ENCODE measurements at regions of chr9 and their contacts with region 1.

Region 1: GRCh38 chr9:84697509-84698114 is 28.1 kb downstream of the NTRK2 start:
- DNase-seq: peak; percentile 80 to 90
- H3K4me3 ChIP-seq: no peak overlapping the region
- H3K27ac ChIP-seq: no peak overlapping the region
- H3K4me1 ChIP-seq: peaks cover 0 to 6% (median 0%) of the 10 kb centered on the region in 4 experiments; a peak in 4 of 7 replicates
- H3K27me3 ChIP-seq: no peaks in the 10 kb centered on the region
- CTCF ChIP-seq: peak; percentile 90 to 95 (median 90)
- EP300 ChIP-seq: no peak; a peak in 1 of 3 replicates
- POLR2A ChIP-seq: no peak
- RAD21 ChIP-seq: peak; percentile 95 to 97

Region 2: DNA sequence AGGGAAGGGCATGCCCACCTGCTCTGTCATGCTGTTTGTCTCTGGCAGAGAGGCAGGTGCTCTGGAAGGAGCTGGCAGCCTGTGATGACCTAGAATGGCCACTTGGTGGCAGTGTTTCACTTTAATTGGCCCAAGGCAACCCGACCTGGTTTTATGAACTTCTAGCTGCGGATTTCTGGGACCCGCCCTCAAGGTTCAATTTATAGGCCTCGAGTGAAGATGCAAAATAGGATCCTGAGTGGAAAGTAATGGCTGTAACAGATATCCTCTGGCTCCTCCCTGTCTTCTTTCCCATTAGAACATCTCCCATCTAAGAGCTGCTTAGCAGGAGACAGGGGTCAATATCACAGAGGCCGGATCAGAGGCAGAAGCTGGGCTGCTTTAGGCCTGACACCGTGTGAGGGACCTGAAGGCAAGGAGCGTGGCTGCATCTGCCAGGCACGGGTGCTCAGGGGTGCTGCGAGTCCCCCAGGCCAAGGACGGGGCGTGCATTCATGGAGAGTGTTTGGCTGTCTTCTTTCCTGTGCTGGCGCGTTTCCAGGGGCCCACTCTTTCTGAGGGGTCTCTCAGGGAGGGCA is 300.4 kb before region 1 on chr9:
- CTCF ChIA-PET with region 1: interaction called, 12 read pairs
- POLR2A ChIA-PET with region 1: no interaction called
- DNase-seq: peak; percentile 31 to 81
- H3K4me3 ChIP-seq: no peak overlapping the region
- H3K27ac ChIP-seq: no peak overlapping the region
- H3K4me1 ChIP-seq: no peaks in the 10 kb centered on the region
- H3K27me3 ChIP-seq: no peaks in the 10 kb centered on the region
- CTCF ChIP-seq: peak; percentile 74 to 84 (median 77)
- EP300 ChIP-seq: no peak
- POLR2A ChIP-seq: no peak
- RAD21 ChIP-seq: peak; percentile 92 to 95

Region 3: DNA sequence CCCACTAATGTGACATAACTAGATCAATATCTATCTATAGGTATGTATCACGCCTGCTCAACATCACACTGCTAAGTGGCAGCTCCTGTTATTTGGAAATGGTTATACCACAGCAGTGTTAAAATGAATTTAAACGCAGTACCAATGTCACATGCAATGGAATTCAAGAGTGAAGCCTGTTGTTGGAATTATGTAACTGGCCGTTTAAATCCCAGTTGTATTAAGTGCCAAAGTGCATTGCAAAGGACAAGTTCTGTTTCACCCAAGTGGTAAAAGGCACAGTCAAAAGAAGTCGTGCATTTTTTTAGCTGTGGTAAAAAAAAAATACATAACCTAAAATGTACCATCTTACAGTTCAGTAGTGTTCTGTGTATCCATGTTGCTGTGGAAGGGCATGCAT is 23.8 kb before region 1 on chr9:
- CTCF ChIA-PET with region 1: interaction called, 12 read pairs
- POLR2A ChIA-PET with region 1: no interaction called
- DNase-seq: no peak
- H3K4me3 ChIP-seq: no peak overlapping the region
- H3K27ac ChIP-seq: no peak overlapping the region
- H3K4me1 ChIP-seq: peaks cover 0 to 12% (median 7%) of the 10 kb centered on the region in 4 experiments; a peak in 6 of 7 replicates
- H3K27me3 ChIP-seq: peaks cover 25 to 39% (median 36%) of the 10 kb centered on the region in 4 experiments
- CTCF ChIP-seq: no peak
- EP300 ChIP-seq: no peak
- POLR2A ChIP-seq: no peak
- RAD21 ChIP-seq: no peak

Region 4: GRCh38 chr9:84953797-84954705 is 256.4 kb after region 1 on chr9:
- CTCF ChIA-PET with region 1: interaction called, 28 read pairs
- POLR2A ChIA-PET with region 1: no interaction called
- DNase-seq: peak; percentile 56 to 92
- H3K4me3 ChIP-seq: no peak overlapping the region
- H3K27ac ChIP-seq: no peak overlapping the region
- H3K4me1 ChIP-seq: no peaks in the 10 kb centered on the region
- H3K27me3 ChIP-seq: peaks cover 0 to 7% (median 2%) of the 10 kb centered on the region in 4 experiments; a peak in 1 of 7 replicates
- CTCF ChIP-seq: peak; percentile 94 to 97 (median 97)
- EP300 ChIP-seq: no peak
- POLR2A ChIP-seq: no peak
- RAD21 ChIP-seq: peak; percentile 94 to 95

Region 5: GRCh38 chr9:85258823-85259370 is 561.3 kb after region 1 on chr9:
- CTCF ChIA-PET with region 1: interaction called, 14 read pairs
- POLR2A ChIA-PET with region 1: no interaction called
- DNase-seq: peak; percentile 47 to 67
- H3K4me3 ChIP-seq: no peak overlapping the region
- H3K27ac ChIP-seq: no peak overlapping the region
- H3K4me1 ChIP-seq: no peaks in the 10 kb centered on the region
- H3K27me3 ChIP-seq: no peaks in the 10 kb centered on the region
- CTCF ChIP-seq: peak; percentile 87 to 98 (median 91)
- EP300 ChIP-seq: no peak
- POLR2A ChIP-seq: no peak
- RAD21 ChIP-seq: peak; percentile 98 to 99